Left ventricle myocardium superior (tissue), 1 donor: ENCODE measurements at regions of chr2 and their contacts with region 1.

Region 1: DNA sequence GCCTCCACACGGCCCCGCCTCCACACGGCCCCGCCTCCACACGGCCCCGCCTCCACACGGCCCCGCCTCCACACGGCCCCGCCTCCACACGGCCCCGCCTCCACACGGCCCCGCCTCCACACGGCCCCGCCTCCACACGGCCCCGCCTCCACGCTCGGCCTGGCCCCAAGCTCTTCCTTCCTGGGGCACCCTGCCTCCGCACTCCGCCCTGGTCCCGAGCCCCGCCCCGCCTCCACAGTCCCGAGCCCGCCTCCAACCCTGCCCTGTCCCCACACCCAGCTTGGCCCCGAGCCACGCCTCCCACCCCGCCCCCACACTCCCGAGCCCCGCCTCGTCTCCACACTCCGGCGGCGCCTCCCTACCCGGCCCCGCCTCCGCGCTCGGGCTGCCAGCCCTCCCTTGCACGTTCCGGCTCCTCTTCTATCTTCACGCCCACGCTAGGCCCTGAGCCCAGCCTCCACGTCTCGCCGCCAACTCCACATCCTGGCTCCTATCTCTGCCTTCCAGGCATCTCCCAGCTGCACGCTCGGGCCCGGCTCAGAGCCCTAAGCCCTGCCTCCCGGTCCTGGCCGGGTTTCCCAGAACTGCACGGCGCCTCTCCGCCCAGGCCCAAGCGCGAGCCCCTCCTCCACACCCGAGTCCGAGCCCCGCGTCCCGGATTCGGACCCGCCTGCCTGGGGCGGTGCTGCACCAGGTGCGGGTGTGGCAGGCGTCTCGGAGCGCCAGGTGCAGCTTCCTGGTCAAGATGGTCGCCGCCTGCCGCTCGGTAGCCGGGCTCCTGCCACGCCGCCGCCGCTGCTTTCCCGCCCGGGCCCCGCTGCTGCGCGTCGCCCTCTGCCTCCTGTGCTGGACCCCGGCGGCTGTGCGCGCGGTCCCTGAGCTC is at the start of gene TMEM87B:
- DNase-seq: peak; percentile 98
- ATAC-seq: peak; percentile 79
- total RNA-seq, gene TMEM87B: 4.7 TPM

Region 2: GRCh38 chr2:111887819-111888223 is 167.3 kb before region 1 on chr2:
- intact Hi-C with region 1: loop called (anchors 5 kb)
- DNase-seq: peak; percentile 83
- ATAC-seq: peak; percentile 55

Region 3: DNA sequence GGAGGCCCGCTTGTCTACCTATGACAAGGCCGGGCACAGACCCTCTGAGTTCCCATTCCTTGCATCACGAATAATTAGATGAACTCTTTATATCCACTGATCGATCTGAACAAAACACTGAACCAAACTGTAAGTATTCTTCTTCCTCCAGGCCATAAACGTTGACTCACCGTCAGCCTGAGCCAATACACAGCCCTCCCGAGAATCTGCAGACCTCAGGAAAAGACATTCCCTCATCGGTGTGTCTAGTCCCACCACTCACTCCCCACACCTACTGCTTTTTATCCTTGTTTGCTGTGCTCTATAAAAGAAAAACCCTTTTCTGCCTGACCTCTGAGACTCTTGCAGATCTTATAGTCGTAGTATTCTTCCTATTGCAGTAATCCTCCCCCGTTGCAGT is 41.0 kb after region 1 on chr2:
- intact Hi-C with region 1: no loop called
- DNase-seq: no peak
- ATAC-seq: no peak